Activated T-helper 1 cell treated with anti-CD3 and anti-CD28 coated beads, Interleukin-12 subunit alpha, Interleukin-12 subunit beta, Interleukin-2, Interleukin-4 antibody, amounts not matched to agents 30 ng/mL and 10 ng/mL and 1 ng/mL, durations not matched to agents 14 hours and 24 hours and 36 hours (primary cell): ENCODE measurements at regions of chr10 and their contacts with region 1.

Region 1: GRCh38 chr10:100683545-100684300 is 61.7 kb upstream of the PAX2 start:
- DNase-seq: no peak
- H3K4me3 Mint-ChIP-seq: no peak overlapping the region
- H3K27ac Mint-ChIP-seq: no peak overlapping the region
- H3K4me1 Mint-ChIP-seq: no peaks in the 10 kb centered on the region
- H3K27me3 Mint-ChIP-seq: peaks cover 89% of the 10 kb centered on the region

Region 2: DNA sequence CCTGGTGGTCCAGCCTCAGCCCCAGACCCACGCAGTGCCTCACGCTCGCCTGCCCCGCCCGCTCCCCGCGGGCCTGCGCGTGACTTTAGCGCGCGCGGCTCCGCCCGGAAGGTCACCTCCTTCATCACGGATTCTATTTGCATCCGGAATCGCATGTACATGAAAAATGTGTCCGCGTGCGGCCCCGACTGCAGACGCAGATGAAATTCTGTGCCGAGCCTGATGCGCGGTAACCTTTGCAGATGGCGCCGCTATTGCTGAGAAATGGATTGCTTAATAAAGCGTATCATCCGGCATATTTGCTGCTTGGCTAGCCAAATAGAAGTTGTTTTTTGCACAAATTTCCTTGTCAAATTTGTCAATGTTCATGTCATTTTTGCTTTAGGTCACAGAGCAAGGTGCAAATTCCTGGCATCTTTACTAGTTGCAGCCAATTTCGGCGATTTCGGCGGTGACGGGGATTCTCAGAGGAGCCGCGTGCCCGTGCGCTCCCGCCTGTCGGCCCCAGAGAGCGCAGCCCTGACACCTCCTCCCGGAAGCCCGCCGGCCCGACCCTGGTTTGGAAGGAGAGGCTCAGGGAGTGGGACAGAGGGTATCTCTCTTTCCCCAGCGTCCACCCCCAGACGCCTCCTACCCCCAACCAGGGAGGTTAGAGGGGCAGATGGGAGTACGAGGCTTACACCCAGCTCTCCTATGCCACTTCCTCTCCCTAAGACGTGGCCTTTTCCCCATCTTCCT is 24.2 kb before region 1 on chr10:
- intact Hi-C with region 1: loop called (anchors 2 kb)
- DNase-seq: no peak
- H3K4me3 Mint-ChIP-seq: no peak overlapping the region
- H3K27ac Mint-ChIP-seq: no peak overlapping the region
- H3K4me1 Mint-ChIP-seq: peaks cover 16% of the 10 kb centered on the region
- H3K27me3 Mint-ChIP-seq: peaks cover 63% of the 10 kb centered on the region

Region 3: DNA sequence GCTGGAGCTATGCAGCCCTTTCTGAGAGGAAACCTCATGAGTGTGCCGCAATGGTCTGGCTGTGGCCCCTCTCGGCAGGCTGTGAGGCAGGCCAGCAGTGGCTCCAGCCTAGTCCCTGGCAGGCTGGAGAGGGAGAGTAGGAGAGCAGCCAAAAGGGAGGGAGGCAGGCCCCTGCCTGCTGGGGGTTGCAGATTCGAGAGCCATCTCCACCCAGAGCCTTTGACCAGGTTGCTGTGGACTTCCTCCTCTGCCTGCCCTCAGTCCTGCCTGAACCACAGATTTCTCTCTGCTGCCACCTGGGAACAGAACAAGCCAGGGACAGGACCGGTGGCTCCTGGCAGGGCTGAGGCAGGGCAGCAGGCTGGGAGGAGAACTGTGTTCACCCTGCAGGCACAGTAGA is 75.6 kb after region 1 on chr10:
- intact Hi-C with region 1: no loop called
- DNase-seq: no peak
- H3K4me3 Mint-ChIP-seq: no peak overlapping the region
- H3K27ac Mint-ChIP-seq: no peak overlapping the region
- H3K4me1 Mint-ChIP-seq: no peaks in the 10 kb centered on the region
- H3K27me3 Mint-ChIP-seq: peaks cover 77% of the 10 kb centered on the region